ENCODE measurements at regions of chr21 and their contacts with region 1.

Region 1: GRCh38 chr21:36218691-36219090 is 62.1 kb downstream of the DOP1B start:
- DNase-seq: no peak
- ATAC-seq: no peak
- H3K4me3 ChIP-seq: no peak overlapping the region
- H3K27ac ChIP-seq: no peak overlapping the region
- H3K4me1 ChIP-seq: no peaks in the 10 kb centered on the region
- H3K27me3 ChIP-seq: peaks cover 22 to 36% of the 10 kb centered on the region in 2 experiments; a peak in 4 of 5 replicates
- CTCF ChIP-seq: no peak
- EP300 ChIP-seq: no peak
- POLR2A ChIP-seq: no peak
- RAD21 ChIP-seq: no peak

Region 2: DNA sequence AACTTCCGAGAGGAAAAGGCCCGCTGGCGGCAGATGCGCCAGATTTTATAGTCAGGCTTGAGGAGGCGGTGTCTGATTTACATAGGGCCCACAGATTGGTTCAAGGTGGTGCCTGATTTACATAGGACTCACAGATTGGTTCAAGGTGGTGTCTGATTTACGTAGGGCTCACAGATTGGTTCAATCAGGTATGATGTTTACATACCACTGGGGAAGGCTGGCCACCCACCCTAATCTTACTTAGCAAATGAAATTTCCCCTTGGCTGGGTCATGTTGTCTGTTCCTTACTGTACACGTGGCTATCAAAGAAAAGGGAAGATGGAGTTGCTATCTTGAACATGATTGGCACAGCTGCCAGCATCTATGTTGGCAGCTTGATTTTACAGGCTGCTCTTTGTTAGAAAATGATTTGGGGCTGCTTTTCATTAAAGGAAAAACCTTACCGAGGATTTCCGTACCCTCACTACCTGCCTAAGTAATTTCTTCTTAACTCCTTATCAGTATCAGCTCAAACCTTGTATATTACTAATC is 254.7 kb before region 1 on chr21:
- CTCF ChIA-PET with region 1: no interaction called
- POLR2A ChIA-PET with region 1: no interaction called
- in situ Hi-C with region 1: no loop called
- intact Hi-C with region 1: no loop called
- DNase-seq: peak in 2 of 4 experiments; percentile 28 to 60
- ATAC-seq: peak; percentile 100
- H3K4me3 ChIP-seq: no peak overlapping the region
- H3K27ac ChIP-seq: no peak overlapping the region
- H3K4me1 ChIP-seq: no peaks in the 10 kb centered on the region
- H3K27me3 ChIP-seq: peaks cover 0 to 5% of the 10 kb centered on the region in 2 experiments; a peak in 2 of 5 replicates
- CTCF ChIP-seq: no peak
- EP300 ChIP-seq: no peak
- POLR2A ChIP-seq: peak; percentile 74
- RAD21 ChIP-seq: no peak

Region 3: GRCh38 chr21:36246080-36246631 is 27.5 kb after region 1 on chr21:
- CTCF ChIA-PET with region 1: no interaction called
- POLR2A ChIA-PET with region 1: interaction called, 4 read pairs
- in situ Hi-C with region 1: no loop called
- intact Hi-C with region 1: loop called (anchors 1 kb)
- DNase-seq: no peak
- ATAC-seq: no peak
- H3K4me3 ChIP-seq: no peak overlapping the region
- H3K27ac ChIP-seq: no peak overlapping the region
- H3K4me1 ChIP-seq: peaks cover 0 to 8% of the 10 kb centered on the region in 2 experiments; a peak in 2 of 5 replicates
- H3K27me3 ChIP-seq: peaks cover 46 to 64% of the 10 kb centered on the region in 2 experiments
- CTCF ChIP-seq: no peak
- EP300 ChIP-seq: no peak
- POLR2A ChIP-seq: no peak
- RAD21 ChIP-seq: no peak